OCI-LY7 (cell line): ENCODE measurements at regions of chr16 and their contacts with region 1.

Region 1: DNA sequence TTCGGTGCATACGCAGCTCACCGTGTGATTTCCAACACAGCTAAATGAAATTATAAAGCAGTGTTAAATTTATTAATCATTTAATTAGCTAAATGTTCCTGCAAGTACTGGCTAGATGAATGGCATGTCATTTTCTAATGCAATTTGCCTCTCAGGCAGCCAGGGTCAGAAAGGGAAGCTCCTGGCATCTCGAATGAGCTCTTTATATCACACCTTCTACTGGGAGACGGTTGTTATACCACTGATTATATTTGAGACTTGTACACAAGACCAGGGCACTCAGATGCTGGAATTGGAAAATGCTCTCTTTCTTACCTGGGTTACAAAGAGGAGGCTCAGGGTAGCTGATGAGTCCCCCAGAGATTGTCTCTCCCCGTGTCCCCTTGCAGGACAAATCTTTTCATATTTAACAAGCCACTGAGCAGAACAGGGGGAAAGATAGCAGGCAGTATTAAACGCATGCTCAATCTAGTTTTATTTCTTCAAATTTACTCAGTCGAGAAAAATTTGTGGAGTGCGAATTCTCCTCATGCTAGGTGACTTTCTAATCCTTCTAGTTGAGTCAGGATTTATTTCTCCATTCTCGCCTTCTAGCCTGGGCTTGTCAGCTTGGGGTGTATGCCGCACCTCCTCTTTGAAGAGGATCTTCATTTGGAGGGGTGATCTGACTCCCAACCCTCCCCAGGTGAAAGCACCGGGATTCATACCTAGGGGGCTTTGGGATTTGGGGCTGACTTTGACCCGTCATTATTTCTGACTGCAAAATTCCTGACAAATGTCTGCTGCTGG is 441.1 kb downstream of the MAF start:
- DNase-seq: no peak
- H3K4me3 ChIP-seq: no peak overlapping the region
- H3K27ac ChIP-seq: no peak overlapping the region
- H3K4me1 ChIP-seq: no peaks in the 10 kb centered on the region
- CTCF ChIP-seq: no peak

Region 2: DNA sequence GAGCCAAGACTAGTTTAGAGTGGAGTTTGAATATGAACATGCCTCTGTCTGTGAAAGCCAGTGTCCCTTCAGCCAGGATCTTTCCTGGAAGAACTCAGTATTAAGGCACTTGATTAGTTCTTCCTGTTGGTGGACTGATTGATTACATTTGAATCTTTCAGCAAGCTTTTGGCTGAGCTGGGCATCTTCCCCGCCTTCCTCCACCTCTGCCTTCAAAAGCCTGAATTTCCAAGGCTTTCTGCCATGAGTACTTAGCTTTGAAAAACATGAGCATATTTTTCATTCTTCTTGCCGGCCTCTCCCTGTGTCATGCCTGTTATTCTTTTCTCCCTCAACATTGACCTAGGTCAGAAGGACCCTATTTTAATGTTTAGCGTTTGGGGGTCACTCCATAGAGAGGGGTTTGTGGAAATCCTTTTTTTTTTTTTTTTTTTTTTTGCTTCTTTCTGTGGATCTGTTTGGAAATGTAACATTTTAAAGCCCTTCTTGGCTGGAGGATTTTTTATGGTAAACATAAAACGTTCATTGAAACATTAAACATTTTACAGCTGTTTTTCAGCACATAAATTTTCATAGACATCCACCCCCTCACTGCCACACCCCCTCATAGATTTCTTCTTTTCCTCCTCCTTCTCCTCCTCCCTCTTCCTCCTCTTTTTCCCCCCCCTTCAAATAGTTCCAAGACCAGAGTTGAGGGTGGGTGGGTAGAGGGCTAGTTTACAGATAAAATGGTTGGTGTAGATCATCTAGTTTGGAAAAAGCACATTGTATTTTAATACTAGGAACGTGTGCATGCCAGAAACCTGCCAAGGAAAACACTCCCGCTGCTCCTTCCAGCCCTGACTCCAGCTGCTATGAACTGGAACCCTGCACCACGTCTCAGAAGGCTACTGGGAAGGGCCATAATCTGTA is 414.1 kb before region 1 on chr16:
- CTCF ChIA-PET with region 1: no interaction called
- POLR2A ChIA-PET with region 1: interaction called, 10 read pairs
- intact Hi-C with region 1: no loop called
- DNase-seq: no peak
- H3K4me3 ChIP-seq: no peak overlapping the region
- H3K27ac ChIP-seq: no peak overlapping the region
- H3K4me1 ChIP-seq: peaks cover 27% of the 10 kb centered on the region
- CTCF ChIP-seq: no peak

Region 3: GRCh38 chr16:79211586-79211985 is 52.1 kb after region 1 on chr16:
- CTCF ChIA-PET with region 1: no interaction called
- POLR2A ChIA-PET with region 1: no interaction called
- intact Hi-C with region 1: no loop called
- DNase-seq: no peak
- H3K4me3 ChIP-seq: no peak overlapping the region
- H3K27ac ChIP-seq: no peak overlapping the region
- H3K4me1 ChIP-seq: no peaks in the 10 kb centered on the region
- CTCF ChIP-seq: no peak